ENCODE measurements at regions of chr4 and their contacts with region 1.

Region 1: GRCh38 chr4:55321707-55322264 is 24.3 kb upstream of the SRD5A3 start:
- DNase-seq: peak; percentile 62 to 87 (median 64)
- ATAC-seq: peak; percentile 97
- H3K4me3 ChIP-seq: no peak overlapping the region
- H3K27ac ChIP-seq: no peak overlapping the region
- H3K4me1 ChIP-seq: no peaks in the 10 kb centered on the region
- H3K27me3 ChIP-seq: no peaks in the 10 kb centered on the region
- CTCF ChIP-seq: peak; percentile 68 to 91 (median 74); a peak in 5 of 6 replicates
- EP300 ChIP-seq: no peak
- POLR2A ChIP-seq: no peak
- RAD21 ChIP-seq: peak; percentile 87 to 89

Region 2: GRCh38 chr4:54855191-54855854 is 466.5 kb before region 1 on chr4:
- CTCF ChIA-PET with region 1: no interaction called
- POLR2A ChIA-PET with region 1: no interaction called
- in situ Hi-C with region 1: no loop called
- intact Hi-C with region 1: no loop called
- DNase-seq: no peak
- ATAC-seq: no peak
- H3K4me3 ChIP-seq: no peak overlapping the region
- H3K27ac ChIP-seq: no peak overlapping the region
- H3K4me1 ChIP-seq: no peaks in the 10 kb centered on the region
- H3K27me3 ChIP-seq: 0 out of 5 replicates have a peak, but pooled peaks cover 0 to 3% of the 10 kb centered on the region in 2 experiments
- CTCF ChIP-seq: no peak
- EP300 ChIP-seq: no peak
- POLR2A ChIP-seq: no peak
- RAD21 ChIP-seq: no peak

Region 3: GRCh38 chr4:54971474-54971950 is 350.3 kb before region 1 on chr4:
- CTCF ChIA-PET with region 1: interaction called, 22 read pairs
- POLR2A ChIA-PET with region 1: no interaction called
- in situ Hi-C with region 1: no loop called
- intact Hi-C with region 1: loop called (anchors 1 kb)
- DNase-seq: peak; percentile 37 to 51 (median 47)
- ATAC-seq: peak; percentile 91
- H3K4me3 ChIP-seq: no peak overlapping the region
- H3K27ac ChIP-seq: no peak overlapping the region
- H3K4me1 ChIP-seq: no peaks in the 10 kb centered on the region
- H3K27me3 ChIP-seq: no peaks in the 10 kb centered on the region
- CTCF ChIP-seq: peak; percentile 67 to 80 (median 72)
- EP300 ChIP-seq: no peak
- POLR2A ChIP-seq: no peak
- RAD21 ChIP-seq: peak; percentile 73 to 76

Region 4: DNA sequence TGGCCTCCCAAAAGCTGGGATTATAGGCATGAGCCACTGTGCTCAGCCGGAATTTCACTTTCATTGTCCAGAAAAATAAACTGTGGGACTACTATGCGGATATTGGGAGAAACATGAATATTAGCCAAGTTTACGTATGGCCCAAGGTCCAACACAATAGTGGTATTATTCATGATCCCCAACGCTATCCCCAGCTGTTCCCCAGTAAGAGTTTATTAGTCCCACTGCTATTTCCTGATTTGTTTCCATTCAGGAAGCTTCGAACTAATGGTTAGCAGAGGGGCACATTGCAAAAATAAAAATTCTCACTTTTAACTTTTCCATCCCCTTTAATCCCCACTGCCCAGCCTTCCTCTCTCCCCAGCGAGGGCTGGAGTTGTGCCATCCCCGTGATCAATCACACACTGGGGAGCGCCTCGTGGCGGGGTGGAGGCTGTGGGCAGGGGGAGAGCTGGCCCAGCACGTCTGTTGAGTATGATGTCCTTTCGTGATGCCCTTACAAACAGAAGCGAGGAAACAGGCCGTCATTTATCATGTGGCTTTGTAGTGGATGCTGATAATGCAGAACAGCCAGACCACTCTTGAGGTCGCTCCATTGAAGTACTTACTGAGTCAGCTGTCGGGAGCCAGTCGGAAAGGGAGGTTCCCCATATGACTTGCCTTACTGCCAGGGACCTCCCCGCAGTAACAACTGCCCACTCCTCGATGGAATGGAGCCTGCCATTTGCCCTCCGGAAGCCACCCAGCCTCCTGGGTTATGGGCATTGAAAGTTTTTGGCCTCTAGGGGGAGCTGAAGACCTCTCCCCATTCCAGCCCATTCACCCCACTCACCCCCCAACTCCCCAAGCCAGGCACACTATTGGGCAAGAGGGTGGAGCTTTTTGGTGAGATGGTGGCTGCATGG is 313.4 kb before region 1 on chr4:
- CTCF ChIA-PET with region 1: no interaction called
- POLR2A ChIA-PET with region 1: no interaction called
- in situ Hi-C with region 1: no loop called
- intact Hi-C with region 1: loop called (anchors 5 kb)
- DNase-seq: peak; percentile 26 to 68 (median 67)
- ATAC-seq: peak; percentile 94
- H3K4me3 ChIP-seq: no peak overlapping the region
- H3K27ac ChIP-seq: no peak overlapping the region
- H3K4me1 ChIP-seq: no peaks in the 10 kb centered on the region
- H3K27me3 ChIP-seq: no peaks in the 10 kb centered on the region
- CTCF ChIP-seq: peak; percentile 58 to 71 (median 63)
- EP300 ChIP-seq: no peak
- POLR2A ChIP-seq: no peak
- RAD21 ChIP-seq: peak; percentile 30 to 49; a peak in 3 of 4 replicates

Region 5: DNA sequence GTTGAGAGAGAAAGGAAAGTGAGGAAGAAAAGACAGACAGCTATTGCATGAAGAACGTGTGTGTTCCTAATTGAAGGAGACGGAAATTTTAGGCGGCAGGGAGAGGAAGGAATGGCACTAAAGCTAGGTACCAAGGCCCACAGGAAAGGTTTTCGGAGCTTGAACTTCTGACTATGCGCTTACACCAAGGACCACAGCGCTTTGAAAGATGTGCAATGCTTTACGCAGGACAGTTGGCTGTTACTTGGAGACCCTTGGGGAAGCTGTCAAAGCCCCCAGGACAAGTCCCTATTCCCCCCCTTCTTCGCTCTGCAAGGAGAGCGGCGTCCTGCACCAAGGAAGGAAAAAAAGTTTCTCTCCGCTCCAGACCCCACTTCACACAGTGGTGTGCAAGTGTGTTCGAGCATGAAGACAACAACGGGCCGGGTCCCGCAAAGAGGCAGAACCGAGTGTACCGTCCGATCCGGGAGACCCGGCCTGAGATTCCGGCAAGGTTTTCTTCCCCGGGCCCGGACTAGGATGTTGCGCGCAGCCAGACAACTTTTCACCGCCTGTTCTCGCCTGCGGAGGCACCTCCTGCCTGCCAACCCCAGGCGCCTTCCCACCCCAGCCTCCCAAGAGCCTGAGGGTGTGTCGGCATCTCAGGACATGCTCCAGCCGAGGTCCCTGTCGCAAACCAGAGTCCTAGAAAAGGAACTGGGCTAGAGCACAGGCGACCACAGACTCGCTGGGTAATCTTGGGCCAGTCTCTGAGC is 197.3 kb before region 1 on chr4:
- CTCF ChIA-PET with region 1: no interaction called
- POLR2A ChIA-PET with region 1: no interaction called
- in situ Hi-C with region 1: no loop called
- intact Hi-C with region 1: no loop called
- DNase-seq: no peak
- ATAC-seq: no peak
- H3K4me3 ChIP-seq: no peak overlapping the region
- H3K27ac ChIP-seq: no peak overlapping the region
- H3K4me1 ChIP-seq: peaks cover 0 to 13% of the 10 kb centered on the region in 2 experiments; a peak in 2 of 5 replicates
- H3K27me3 ChIP-seq: peaks cover 17 to 22% of the 10 kb centered on the region in 2 experiments; a peak in 4 of 5 replicates
- CTCF ChIP-seq: no peak
- EP300 ChIP-seq: no peak
- POLR2A ChIP-seq: no peak
- RAD21 ChIP-seq: no peak

Region 6: GRCh38 chr4:55184600-55185523 is 136.9 kb before region 1 on chr4:
- CTCF ChIA-PET with region 1: interaction called, 10 read pairs
- POLR2A ChIA-PET with region 1: no interaction called
- in situ Hi-C with region 1: loop called (anchors 5 kb)
- intact Hi-C with region 1: loop called (anchors 2 kb)
- DNase-seq: peak; percentile 31 to 62 (median 38)
- ATAC-seq: peak; percentile 93
- H3K4me3 ChIP-seq: no peak overlapping the region
- H3K27ac ChIP-seq: no peak overlapping the region
- H3K4me1 ChIP-seq: no peaks in the 10 kb centered on the region
- H3K27me3 ChIP-seq: no peaks in the 10 kb centered on the region; a peak in 1 of 5 replicates
- CTCF ChIP-seq: peak; percentile 57 to 77 (median 66)
- EP300 ChIP-seq: no peak
- POLR2A ChIP-seq: no peak
- RAD21 ChIP-seq: peak; percentile 61

Measured in K562 (cell line).